Cardiac septum (tissue), 1 donor: ENCODE measurements at regions of chr3 and their contacts with region 1.

Region 1: DNA sequence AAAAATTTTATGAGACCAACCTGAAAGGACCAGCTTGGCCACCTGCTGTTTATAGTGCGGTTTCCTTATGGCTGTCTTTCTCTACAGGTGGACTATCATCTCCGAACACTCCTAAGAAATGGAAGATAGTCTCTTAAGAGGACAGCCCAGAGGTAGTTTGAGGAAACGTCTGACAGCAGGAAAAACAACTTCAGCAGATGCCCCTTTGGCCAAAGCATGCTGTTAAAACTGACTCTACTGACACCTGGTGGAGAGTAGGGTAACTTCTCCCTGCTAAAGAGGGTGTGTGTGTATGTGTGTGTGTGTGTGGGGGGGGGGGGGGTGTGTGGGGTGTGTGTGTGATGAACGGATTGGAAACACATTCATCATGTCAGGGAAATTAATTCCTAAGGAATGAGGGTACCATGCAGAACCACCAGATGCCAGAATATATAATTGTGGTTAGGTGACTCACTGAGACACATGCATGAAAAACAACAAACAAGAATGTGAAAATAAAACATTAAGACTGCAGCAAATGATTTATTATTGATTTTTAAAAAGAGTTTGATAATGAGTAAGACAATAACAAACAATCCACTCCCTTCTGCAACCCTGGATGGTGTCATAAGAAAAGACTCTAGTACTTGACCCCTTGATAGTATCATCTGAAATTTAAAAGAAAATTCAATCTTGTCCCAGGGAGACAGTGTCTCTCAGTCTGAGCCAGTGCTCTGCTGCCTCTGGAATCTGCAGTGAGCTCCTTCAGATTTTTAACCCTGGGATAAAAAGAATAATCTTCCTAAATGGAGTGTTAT is 256.5 kb downstream of the THRB start:
- DNase-seq: no peak

Region 2: DNA sequence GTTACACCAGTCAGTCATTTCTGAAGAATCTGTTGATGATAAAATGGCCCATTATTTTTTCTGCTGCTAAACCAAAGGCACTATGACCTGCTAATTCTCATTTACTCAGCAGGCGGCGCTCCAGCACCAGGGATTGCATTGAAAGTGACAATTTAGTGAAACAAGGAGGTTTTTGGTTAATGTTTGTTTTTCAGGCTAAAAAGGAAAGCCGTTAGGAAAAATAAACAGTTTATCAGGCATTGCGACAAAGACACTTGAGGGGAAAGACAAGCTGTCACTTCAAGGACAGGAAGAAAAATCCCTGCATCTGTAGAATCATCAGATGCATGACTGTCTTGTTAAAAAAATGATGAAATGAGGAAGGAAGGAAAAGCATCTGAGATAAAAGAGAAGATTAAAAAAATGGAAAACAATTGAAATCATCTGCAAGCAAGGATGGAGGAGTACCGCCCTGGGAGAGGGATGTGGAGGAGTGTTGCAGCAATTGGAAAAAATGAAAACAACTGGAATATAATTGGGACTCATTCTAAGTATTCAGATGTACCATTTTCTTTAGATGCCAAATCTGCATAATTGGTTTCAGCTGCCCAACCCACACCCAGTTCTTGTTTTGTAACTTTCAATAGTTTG is 239.0 kb before region 1 on chr3:
- intact Hi-C with region 1: loop called (anchors 1 kb)
- DNase-seq: no peak

Region 3: DNA sequence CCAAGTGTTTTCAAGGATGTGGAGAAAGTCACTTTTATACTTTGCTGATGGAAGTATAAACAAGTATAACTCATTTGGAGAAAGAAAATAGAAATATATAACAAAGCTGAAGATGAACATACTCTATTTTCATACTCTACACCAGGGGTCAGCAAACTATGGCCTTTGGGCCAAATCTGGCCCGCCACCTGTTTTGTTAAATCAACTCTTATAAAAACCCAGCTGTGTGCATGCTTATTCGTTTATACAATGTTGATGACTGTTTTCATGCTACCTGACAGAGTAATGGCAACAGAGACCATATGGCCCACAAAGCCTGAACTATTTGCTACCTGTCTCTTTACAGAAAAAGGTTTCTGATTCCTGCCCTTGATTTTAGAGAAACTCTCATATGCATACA is 169.1 kb before region 1 on chr3:
- intact Hi-C with region 1: loop called (anchors 5 kb)
- DNase-seq: no peak

Region 4: DNA sequence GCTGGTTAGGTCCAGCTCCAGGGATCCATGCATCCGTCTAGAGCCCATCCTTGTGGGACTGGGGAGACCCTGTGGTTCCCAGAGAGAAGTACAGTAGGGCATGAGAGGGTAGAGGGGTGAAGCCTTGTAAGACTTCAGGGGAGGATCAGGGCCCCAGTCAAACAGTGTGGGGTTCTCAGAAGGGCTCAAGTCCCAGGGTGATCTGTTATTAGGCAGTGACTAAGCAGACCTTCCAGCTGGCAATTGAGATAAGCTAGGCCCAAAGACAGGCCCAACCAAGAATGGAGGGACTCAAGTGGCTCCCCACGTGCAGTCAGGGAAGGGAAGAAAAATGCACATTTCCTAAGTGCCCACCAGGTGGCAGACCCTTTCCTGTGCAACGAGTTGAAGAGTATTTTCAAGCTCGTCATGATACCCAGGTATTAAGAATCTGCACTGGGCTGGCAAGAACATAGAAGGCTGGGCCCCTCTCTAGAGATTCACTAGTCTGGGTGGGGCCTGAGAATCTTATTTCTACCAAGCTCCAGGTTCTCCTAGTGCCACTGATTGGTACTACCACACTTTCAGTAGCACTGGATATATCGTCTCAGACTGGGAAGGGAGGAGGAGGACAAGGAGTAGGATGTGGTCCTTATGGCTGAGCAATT is 52.3 kb before region 1 on chr3:
- intact Hi-C with region 1: loop called (anchors 2 kb)
- DNase-seq: no peak

Region 5: DNA sequence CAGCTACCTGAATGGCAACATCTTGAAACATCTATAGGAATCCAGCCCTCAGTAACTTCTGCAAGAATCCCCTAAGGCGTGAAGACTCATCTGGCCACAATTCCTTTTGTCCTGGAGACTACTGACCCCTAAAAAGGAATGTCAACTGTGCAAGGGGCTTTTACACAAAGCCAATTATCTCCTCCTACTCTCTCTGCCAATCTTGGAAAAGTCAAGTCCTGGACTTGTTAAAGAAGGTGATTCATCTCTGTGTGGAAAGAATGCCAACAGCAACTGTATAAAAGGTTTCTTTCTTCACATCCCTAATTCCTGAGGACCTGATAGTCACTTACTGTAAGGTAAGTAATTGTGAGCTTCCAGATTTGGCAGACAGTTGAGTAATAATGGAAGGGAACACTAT is 234.2 kb after region 1 on chr3:
- intact Hi-C with region 1: no loop called
- DNase-seq: no peak